Aorta (tissue), 5 donors: ENCODE measurements at regions of chr13 and their contacts with region 1.

Region 1: DNA sequence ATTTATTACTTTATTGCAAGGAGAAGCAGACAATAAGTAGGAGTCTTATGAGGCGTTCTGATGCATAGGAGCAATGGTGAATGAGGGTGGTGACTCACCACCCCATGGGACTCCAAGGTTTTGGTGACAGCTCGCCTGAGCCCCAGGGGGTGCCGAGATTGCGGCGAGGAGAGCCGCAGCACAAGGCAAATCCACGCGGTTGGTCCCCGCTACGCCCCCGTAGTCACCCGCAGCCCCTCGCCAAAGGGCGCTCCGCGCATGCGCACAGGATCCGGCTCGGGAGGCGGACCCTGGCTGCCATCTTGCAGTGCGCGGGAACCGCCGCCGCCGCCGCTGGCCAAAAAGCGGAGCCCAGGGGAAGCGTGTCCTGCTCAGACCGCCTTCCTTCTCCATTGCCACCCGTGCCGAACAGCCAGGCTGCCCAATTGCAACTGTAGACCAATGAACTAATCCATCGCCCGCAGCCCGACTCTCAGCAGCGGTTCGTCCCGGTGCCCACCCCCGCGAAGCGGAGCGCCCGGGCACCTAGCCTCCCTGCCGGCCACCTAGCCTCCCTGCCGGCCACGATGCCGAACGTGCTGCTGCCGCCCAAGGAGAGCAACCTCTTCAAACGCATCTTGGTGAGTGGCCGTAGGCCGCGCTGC is at the start of gene NAA16:
- DNase-seq: peak; percentile 94 to 97
- ATAC-seq: peak; percentile 97
- H3K4me3 ChIP-seq: peak within 1 kb of the TSS; percentile 40 to 68
- H3K27ac ChIP-seq: peak within 1 kb of the TSS; percentile 20 to 30
- H3K4me1 ChIP-seq: no peaks in the 10 kb centered on the region
- H3K27me3 ChIP-seq: no peaks in the 10 kb centered on the region
- total RNA-seq, gene NAA16: 16.0 to 24.7 TPM

Region 2: GRCh38 chr13:41122838-41123237 is 188.2 kb before region 1 on chr13:
- intact Hi-C with region 1: no loop called
- DNase-seq: no peak
- ATAC-seq: no peak
- H3K4me3 ChIP-seq: no peak overlapping the region
- H3K27ac ChIP-seq: no peak overlapping the region
- H3K4me1 ChIP-seq: no peaks in the 10 kb centered on the region
- H3K27me3 ChIP-seq: no peaks in the 10 kb centered on the region

Region 3: GRCh38 chr13:41263261-41264027 is 47.6 kb before region 1 on chr13 and contains the start of gene MTRF1:
- intact Hi-C with region 1: loop called in 1 of 2 experiments (anchors 1 kb)
- DNase-seq: peak; percentile 87 to 91
- ATAC-seq: peak; percentile 94
- H3K4me3 ChIP-seq: peak within 1 kb of the TSS; percentile 48 to 97
- H3K27ac ChIP-seq: peak within 1 kb of the TSS in 1 of 2 donors; percentile 49
- H3K4me1 ChIP-seq: no peaks in the 10 kb centered on the region
- H3K27me3 ChIP-seq: no peaks in the 10 kb centered on the region
- total RNA-seq, gene MTRF1: 6.8 to 13.7 TPM

Region 4: GRCh38 chr13:42271337-42272114 is 960.4 kb after region 1 on chr13:
- intact Hi-C with region 1: no loop called
- DNase-seq: peak; percentile 97
- ATAC-seq: peak; percentile 98
- H3K4me3 ChIP-seq: peak overlapping the region; percentile 63 to 81
- H3K27ac ChIP-seq: peak overlapping the region in 1 of 2 donors; percentile 3
- H3K4me1 ChIP-seq: peaks cover 3 to 7% of the 10 kb centered on the region in 2 donors
- H3K27me3 ChIP-seq: no peaks in the 10 kb centered on the region